HCT116 (cell line): ENCODE measurements at regions of chr2 and their contacts with region 1.

Region 1: GRCh38 chr2:105403785-105404698 is 5.2 kb upstream of the FHL2 start:
- DNase-seq: peak; percentile 93
- ATAC-seq: peak; percentile 84
- H3K4me3 ChIP-seq: peak overlapping the region; percentile 13 to 50
- H3K27ac ChIP-seq: peak overlapping the region; percentile 83
- H3K4me1 ChIP-seq: peaks cover 30 to 59% of the 10 kb centered on the region in 2 experiments
- H3K27me3 ChIP-seq: no peaks in the 10 kb centered on the region
- CTCF ChIP-seq: peak; percentile 21 to 69 (median 68); a peak in 5 of 6 replicates
- POLR2A ChIP-seq: no peak
- RAD21 ChIP-seq: peak; percentile 37

Region 2: DNA sequence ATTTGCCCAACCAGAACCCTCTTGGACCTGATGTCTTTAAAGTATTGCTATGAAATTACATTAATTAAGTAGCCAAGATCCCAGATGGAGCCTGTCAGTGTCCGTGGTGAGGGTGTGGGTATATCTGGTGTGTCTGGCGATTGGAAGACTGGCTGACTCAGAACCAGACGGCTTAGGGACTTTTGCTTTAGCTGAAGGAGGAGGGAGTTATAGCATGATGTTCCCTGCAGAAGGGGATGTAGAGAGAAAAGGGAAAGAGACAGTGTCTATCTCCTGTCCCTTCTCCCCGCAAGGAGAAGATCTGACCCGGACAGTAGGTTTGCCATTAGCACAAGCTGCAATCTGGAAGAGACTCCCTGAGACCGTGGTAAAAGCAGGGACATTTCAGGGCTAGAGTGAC is 489.5 kb before region 1 on chr2:
- CTCF ChIA-PET with region 1: no interaction called
- POLR2A ChIA-PET with region 1: no interaction called
- RAD21 ChIA-PET with region 1: no interaction called
- intact Hi-C with region 1: no loop called
- DNase-seq: no peak
- ATAC-seq: no peak
- H3K4me3 ChIP-seq: no peak overlapping the region
- H3K27ac ChIP-seq: no peak overlapping the region
- H3K4me1 ChIP-seq: peaks cover 4% of the 10 kb centered on the region in 2 experiments; a peak in 2 of 4 replicates
- H3K27me3 ChIP-seq: no peaks in the 10 kb centered on the region; the same call in 1 of the 2 replicates
- CTCF ChIP-seq: no peak
- POLR2A ChIP-seq: no peak
- RAD21 ChIP-seq: no peak

Region 3: DNA sequence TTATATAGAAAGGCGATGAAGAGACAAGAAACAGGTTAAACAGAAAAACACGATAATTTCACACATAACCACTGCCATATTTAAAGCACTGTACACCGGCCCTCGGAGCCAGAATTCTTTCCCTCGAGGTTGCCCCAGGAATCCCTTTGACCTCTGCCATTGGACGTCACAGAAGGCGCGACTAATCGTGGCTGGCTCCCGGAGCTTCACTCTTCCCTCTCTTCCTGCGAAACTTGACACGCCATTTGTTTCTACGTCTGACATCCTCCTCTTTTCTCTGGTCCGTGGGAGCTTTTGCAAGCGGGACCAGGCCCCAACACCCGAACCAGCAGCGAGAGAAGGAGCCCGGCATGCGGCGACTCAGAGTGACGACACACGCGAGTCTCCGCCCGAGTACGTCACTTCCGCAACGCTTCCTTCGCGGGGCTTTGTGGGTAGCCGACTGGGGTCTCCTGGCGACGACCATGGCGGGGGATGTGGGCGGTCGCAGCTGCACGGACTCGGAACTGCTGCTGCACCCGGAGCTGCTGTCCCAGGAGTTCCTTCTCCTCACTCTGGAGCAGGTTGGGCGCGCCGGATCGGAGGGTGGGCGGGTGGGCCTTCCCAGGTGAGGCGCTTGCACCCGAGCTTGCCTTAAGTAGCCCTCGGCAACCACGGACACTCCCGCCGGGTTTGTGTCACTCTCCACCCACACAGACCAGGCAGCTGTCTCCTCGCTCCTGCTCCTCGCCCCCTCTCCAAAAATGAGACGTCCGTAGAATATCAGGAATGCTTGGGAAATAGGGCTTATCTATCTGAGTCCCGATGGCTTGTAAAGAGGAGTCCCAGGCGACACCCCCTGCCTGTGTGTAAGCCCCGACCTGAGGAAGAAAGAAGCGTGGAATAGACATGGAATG is 66.7 kb before region 1 on chr2 and contains the start of gene C2orf49:
- CTCF ChIA-PET with region 1: no interaction called
- POLR2A ChIA-PET with region 1: no interaction called
- RAD21 ChIA-PET with region 1: no interaction called
- intact Hi-C with region 1: loop called (anchors 5 kb)
- DNase-seq: peak; percentile 72
- ATAC-seq: peak; percentile 86
- H3K4me3 ChIP-seq: peak within 1 kb of the TSS; percentile 89 to 93
- H3K27ac ChIP-seq: peak within 1 kb of the TSS; percentile 91
- H3K4me1 ChIP-seq: peaks cover 7 to 17% of the 10 kb centered on the region in 2 experiments
- H3K27me3 ChIP-seq: no peaks in the 10 kb centered on the region
- CTCF ChIP-seq: no peak
- POLR2A ChIP-seq: no peak
- RAD21 ChIP-seq: no peak
- total RNA-seq, gene C2orf49: 17.2 TPM

Region 4: GRCh38 chr2:105369747-105370690 is 34.0 kb before region 1 on chr2:
- CTCF ChIA-PET with region 1: no interaction called
- POLR2A ChIA-PET with region 1: no interaction called
- RAD21 ChIA-PET with region 1: no interaction called
- intact Hi-C with region 1: no loop called
- DNase-seq: peak; percentile 54
- ATAC-seq: peak; percentile 99
- H3K4me3 ChIP-seq: no peak overlapping the region
- H3K27ac ChIP-seq: no peak overlapping the region; the same call in 1 of the 2 replicates
- H3K4me1 ChIP-seq: no peaks in the 10 kb centered on the region
- H3K27me3 ChIP-seq: no peaks in the 10 kb centered on the region
- CTCF ChIP-seq: peak; percentile 79 to 80 (median 80)
- POLR2A ChIP-seq: no peak
- RAD21 ChIP-seq: peak; percentile 92

Region 5: DNA sequence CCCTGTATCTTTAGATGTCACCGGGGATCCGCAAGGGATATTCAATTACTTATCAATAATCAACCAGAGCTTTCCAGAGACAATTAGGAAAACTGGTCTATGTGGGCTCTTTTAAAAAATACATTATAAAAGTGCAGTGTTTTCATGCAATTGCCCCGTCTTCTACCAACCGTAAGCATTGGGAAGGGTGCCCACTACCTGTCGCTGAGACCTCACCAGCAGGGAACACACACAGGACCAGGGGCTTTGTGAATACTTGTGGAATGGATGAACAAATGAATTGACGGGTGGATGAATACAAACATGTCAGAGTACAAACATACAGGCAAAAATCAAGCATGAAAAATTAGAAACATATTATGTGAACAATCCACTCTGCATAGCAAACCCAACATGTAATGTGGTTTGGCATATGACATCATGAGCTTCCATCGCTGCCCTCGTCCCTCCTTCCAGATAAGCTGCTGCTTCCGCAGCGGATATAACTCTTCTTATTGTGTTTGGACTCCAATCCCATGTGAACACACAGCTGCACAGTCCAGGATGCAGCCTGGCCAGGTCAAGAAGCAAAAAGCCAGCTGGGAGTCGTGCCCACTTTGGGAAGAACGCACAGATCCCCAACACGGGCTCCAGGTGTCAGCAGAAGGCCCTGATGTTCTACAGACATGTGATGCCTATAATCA is 10.5 kb before region 1 on chr2:
- CTCF ChIA-PET with region 1: interaction called, 3 read pairs
- POLR2A ChIA-PET with region 1: interaction called, 11 read pairs
- RAD21 ChIA-PET with region 1: no interaction called
- intact Hi-C with region 1: no loop called
- DNase-seq: no peak
- ATAC-seq: no peak
- H3K4me3 ChIP-seq: no peak overlapping the region
- H3K27ac ChIP-seq: no peak overlapping the region
- H3K4me1 ChIP-seq: peaks cover 48 to 72% of the 10 kb centered on the region in 2 experiments
- H3K27me3 ChIP-seq: no peaks in the 10 kb centered on the region
- CTCF ChIP-seq: no peak
- POLR2A ChIP-seq: no peak
- RAD21 ChIP-seq: no peak

Region 6: DNA sequence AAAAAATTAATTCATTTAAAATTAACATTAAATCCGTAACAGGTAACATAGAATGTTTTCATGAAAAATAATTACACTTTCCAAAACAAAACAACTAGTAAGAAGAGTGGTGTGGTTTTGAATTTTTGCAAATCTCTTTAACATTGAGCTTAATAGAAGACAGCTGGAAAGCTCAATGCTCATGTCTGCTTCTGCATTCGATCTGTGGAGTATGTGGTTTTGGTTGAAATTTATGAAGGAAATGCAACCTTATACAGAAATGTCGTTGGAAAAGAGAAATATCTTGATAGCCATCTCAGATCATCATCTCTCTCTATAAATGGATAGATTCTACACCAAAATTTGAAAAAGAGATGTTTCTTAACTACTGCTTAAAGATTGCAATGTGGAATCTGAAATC is 12.1 kb after region 1 on chr2:
- CTCF ChIA-PET with region 1: interaction called, 10 read pairs
- POLR2A ChIA-PET with region 1: interaction called, 8 read pairs
- RAD21 ChIA-PET with region 1: no interaction called
- intact Hi-C with region 1: no loop called
- DNase-seq: no peak
- ATAC-seq: no peak
- H3K4me3 ChIP-seq: no peak overlapping the region
- H3K27ac ChIP-seq: no peak overlapping the region
- H3K4me1 ChIP-seq: peaks cover 3 to 23% of the 10 kb centered on the region in 2 experiments; a peak in 3 of 4 replicates
- H3K27me3 ChIP-seq: no peaks in the 10 kb centered on the region
- CTCF ChIP-seq: no peak
- POLR2A ChIP-seq: no peak
- RAD21 ChIP-seq: no peak

Region 7: GRCh38 chr2:105454801-105455485 is 50.9 kb after region 1 on chr2:
- CTCF ChIA-PET with region 1: no interaction called
- POLR2A ChIA-PET with region 1: interaction called, 10 read pairs
- RAD21 ChIA-PET with region 1: no interaction called
- intact Hi-C with region 1: loop called (anchors 1 kb)
- DNase-seq: peak; percentile 69
- ATAC-seq: peak; percentile 82
- H3K4me3 ChIP-seq: peak overlapping the region in 1 of 2 experiments; percentile 34
- H3K27ac ChIP-seq: peak overlapping the region; percentile 48
- H3K4me1 ChIP-seq: peaks cover 19 to 23% of the 10 kb centered on the region in 2 experiments
- H3K27me3 ChIP-seq: no peaks in the 10 kb centered on the region
- CTCF ChIP-seq: peak; percentile 29 to 64 (median 56); a peak in 5 of 6 replicates
- POLR2A ChIP-seq: no peak
- RAD21 ChIP-seq: peak; percentile 47